ENCODE measurements at regions of chr11 and their contacts with region 1.

Region 1: DNA sequence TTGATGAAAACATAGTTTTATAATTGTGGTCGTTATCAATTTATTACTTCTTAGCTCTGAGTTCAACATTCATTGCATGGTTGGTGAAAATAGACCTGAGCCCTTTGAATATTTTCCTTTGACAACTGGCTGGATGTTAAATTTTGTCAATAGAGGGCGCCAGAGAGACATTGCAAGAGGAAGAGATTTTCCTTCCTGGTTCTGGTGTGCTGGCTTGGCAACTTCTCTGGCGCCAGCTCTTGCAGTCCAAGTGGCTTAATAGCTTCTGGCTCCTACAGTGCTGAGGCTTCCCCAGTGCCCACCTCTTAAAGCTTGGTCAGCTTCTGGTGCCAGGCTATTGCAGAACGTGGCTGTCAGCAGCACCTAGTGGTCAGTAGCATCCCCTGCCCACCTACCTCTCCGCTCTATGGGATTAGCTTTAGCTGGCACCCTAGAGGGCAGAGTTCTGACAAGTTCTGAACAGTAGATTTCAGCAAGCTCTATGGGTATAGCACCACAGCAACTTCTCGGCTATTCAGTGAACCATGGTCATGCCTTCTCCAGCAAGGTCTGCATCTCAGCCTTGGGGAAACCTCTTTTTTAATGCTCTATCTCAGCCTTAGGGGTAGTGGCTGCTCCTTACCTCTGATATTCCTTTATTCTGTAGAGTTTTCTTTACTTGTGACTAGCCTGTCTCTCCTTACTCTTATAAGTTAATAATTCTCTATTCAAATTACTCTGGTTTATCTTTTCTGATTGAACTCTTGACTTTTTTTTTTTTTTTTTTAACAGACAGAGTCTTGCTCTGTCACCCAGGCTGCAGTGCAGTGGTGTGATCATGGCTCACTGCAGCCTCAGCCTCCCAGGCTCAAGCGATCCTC is 59.4 kb downstream of the ACER3 start:
- DNase-seq: peak; percentile 67 to 68
- H3K4me3 ChIP-seq: no peak overlapping the region
- H3K27ac ChIP-seq: no peak overlapping the region
- H3K4me1 ChIP-seq: peaks cover 12% of the 10 kb centered on the region
- H3K27me3 ChIP-seq: no peaks in the 10 kb centered on the region
- CTCF ChIP-seq: peak; percentile 96

Region 2: DNA sequence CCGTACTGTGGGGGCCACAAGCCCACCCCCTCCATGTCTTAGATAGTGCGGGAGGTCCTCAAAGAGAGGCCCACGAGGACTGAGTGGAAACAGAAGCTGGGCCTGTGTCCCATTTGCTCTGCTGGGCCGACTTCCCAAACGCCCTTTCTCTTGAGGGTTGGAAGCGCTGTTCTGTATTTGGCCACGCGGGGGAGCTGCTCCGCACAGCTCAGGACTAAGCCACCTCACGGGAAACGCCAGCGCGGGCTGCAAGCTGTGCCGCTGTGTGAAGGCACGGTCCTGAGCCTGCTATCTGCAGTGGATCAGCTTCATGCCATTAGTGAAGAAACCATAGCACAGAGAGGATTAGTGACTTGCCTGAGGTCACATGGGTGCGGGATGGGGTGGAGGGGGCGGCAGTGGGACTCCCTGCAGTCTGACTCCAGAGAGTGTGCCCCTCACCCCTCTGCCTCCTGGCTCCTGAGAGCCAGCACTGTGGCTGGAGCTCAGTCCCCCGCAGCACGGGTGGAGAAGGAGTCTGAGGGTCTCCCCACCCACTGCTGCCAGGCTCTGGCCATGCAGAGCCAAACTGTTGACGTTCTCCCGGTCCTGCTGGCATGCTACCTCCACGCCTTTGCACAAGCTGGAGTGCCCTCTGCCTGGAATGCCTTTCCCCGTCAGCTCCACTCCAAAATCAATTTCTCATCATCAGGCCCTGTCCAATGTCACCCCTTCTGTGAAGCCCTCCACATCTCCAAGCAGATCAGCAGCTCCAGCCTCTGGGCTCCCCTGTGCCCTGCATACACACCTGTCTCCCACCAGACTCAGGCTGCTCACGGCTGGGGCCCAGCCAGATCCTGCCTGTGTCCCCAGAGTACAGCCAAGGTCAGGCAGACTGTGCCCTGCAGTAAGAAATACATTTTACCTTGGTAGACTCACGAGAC is 198.1 kb before region 1 on chr11:
- CTCF ChIA-PET with region 1: interaction called, 12 read pairs
- POLR2A ChIA-PET with region 1: no interaction called
- intact Hi-C with region 1: no loop called
- DNase-seq: peak; percentile 58 to 77
- H3K4me3 ChIP-seq: no peak overlapping the region; the same call in 1 of the 2 replicates
- H3K27ac ChIP-seq: no peak overlapping the region
- H3K4me1 ChIP-seq: no peaks in the 10 kb centered on the region
- H3K27me3 ChIP-seq: no peaks in the 10 kb centered on the region
- CTCF ChIP-seq: peak; percentile 95

Region 3: GRCh38 chr11:76734456-76735420 is 185.4 kb before region 1 on chr11:
- CTCF ChIA-PET with region 1: interaction called, 29 read pairs
- POLR2A ChIA-PET with region 1: no interaction called
- intact Hi-C with region 1: loop called (anchors 1 kb)
- DNase-seq: no peak
- H3K4me3 ChIP-seq: no peak overlapping the region
- H3K27ac ChIP-seq: no peak overlapping the region
- H3K4me1 ChIP-seq: no peaks in the 10 kb centered on the region
- H3K27me3 ChIP-seq: no peaks in the 10 kb centered on the region
- CTCF ChIP-seq: no peak

Region 4: GRCh38 chr11:76807206-76807875 is 112.8 kb before region 1 on chr11:
- CTCF ChIA-PET with region 1: interaction called, 18 read pairs
- POLR2A ChIA-PET with region 1: no interaction called
- intact Hi-C with region 1: loop called (anchors 1 kb)
- DNase-seq: peak; percentile 56 to 78
- H3K4me3 ChIP-seq: peak overlapping the region; percentile 12; the same call in 1 of the 2 replicates
- H3K27ac ChIP-seq: no peak overlapping the region
- H3K4me1 ChIP-seq: peaks cover 15% of the 10 kb centered on the region
- H3K27me3 ChIP-seq: no peaks in the 10 kb centered on the region
- CTCF ChIP-seq: peak; percentile 89

Region 5: GRCh38 chr11:77039491-77040400 is 119.6 kb after region 1 on chr11:
- CTCF ChIA-PET with region 1: interaction called, 11 read pairs
- POLR2A ChIA-PET with region 1: interaction called, 19 read pairs
- intact Hi-C with region 1: no loop called
- DNase-seq: no peak
- H3K4me3 ChIP-seq: no peak overlapping the region
- H3K27ac ChIP-seq: no peak overlapping the region
- H3K4me1 ChIP-seq: peaks cover 31% of the 10 kb centered on the region
- H3K27me3 ChIP-seq: no peaks in the 10 kb centered on the region
- CTCF ChIP-seq: no peak; the same call in 1 of the 2 replicates

Region 6: DNA sequence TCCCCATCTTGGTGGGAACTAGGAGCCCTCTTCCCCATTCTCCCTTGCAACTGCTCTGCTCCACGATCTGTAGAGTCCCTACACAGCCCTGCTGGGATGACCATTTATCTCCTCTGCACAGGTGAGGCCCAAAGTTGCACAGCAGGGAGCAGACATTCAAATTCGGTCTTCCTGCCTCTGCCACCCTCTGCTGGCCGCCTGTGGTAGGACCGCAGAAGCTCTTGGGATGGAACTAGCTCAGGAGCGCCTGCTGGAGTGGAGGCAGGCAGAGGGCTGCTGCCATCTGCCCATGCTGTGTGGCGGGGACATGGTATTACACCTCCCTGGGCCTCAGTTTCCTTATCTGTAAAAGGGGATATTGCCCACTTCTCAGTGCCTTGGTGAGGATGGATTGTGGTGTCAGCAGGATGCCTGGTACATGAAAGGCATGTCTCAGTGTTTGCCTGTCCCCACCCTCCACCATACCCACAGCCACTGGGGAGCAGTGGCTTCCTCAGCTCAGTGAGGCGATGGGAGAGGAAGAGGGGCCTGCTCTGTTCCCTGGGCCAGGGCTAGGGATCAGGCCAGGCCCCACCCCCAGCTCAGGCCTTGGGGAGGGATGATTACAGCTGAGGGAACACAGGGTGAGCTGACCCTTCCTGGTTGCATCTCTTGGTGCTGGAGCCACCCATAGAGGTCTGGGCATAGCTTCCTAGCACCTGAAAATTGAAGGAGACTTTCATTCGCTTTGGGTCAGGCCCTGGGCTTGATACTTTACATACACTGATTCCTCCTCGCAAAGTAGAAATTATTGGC is 171.2 kb after region 1 on chr11:
- CTCF ChIA-PET with region 1: interaction called, 11 read pairs
- POLR2A ChIA-PET with region 1: no interaction called
- intact Hi-C with region 1: no loop called
- DNase-seq: peak; percentile 64 to 86
- H3K4me3 ChIP-seq: no peak overlapping the region
- H3K27ac ChIP-seq: no peak overlapping the region
- H3K4me1 ChIP-seq: peaks cover 47% of the 10 kb centered on the region
- H3K27me3 ChIP-seq: no peaks in the 10 kb centered on the region
- CTCF ChIP-seq: peak; percentile 99

Region 7: GRCh38 chr11:77113382-77114088 is 193.4 kb after region 1 on chr11:
- CTCF ChIA-PET with region 1: no interaction called
- POLR2A ChIA-PET with region 1: no interaction called
- intact Hi-C with region 1: loop called (anchors 5 kb)
- DNase-seq: peak in 1 of 2 experiments; percentile 52
- H3K4me3 ChIP-seq: no peak overlapping the region
- H3K27ac ChIP-seq: no peak overlapping the region
- H3K4me1 ChIP-seq: peaks cover 3% of the 10 kb centered on the region; the same call in 1 of the 2 replicates
- H3K27me3 ChIP-seq: no peaks in the 10 kb centered on the region
- CTCF ChIP-seq: peak; percentile 86

Measured in PC-9 (cell line).